Naive thymus-derived CD4-positive, alpha-beta T cell (primary cell): ENCODE measurements at regions of chr9 and their contacts with region 1.

Region 1: DNA sequence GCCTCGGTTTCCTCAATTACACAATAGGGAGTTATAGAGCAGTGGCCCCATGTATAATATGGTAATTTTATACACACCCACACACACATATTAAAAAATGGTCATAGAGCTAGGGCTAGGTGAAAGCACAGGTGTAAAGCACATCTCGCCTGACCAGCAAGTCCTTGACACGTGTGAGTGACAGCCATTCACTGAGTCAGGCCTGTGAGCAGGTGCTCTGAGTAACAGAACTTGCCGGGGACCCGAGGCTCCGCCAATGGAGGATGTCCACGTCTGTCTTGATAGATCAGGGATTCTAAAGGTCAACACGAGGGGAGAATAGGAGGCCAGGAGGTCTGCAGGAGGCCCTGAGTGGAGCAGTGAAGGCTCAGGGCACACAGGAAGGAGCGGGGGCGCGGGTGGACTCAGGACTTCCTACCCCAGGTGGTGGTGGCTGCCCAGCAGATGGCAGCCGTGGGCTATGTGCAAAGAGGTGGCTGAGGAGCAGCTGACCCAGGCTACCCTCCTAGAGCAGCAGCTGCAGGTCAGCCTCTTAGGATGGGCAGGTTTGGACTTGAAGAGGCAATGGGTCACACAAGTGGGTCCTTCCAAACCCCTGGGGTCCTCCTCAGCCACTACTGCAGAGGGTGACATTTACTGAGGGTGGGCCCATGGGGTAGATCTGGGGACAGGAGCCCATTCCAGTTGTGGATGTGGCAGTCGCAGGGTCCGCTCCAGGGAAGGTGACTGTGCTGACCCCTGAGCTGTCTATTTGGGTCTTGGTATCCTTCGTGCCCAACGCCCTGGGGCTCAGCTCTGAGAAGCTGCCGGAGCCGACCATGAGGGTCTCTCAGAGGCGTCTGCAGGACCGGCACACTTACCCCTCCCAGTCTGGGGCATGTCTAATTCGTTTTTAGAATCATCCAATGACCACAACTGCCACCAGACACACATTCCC is 45.9 kb downstream of the PRRT1B start:
- DNase-seq: peak; percentile 50 to 78 (median 68)
- ATAC-seq: peak; percentile 95
- H3K4me3 ChIP-seq: no peak overlapping the region
- H3K4me3 Mint-ChIP-seq: peak overlapping the region in 2 of 10 donors; percentile 13 to 31
- H3K27ac ChIP-seq: no peak overlapping the region
- H3K27ac Mint-ChIP-seq: peak overlapping the region; percentile 18 to 90 (median 60)
- H3K4me1 ChIP-seq: peaks cover 12 to 19% of the 10 kb centered on the region in 2 donors
- H3K4me1 Mint-ChIP-seq: peaks cover 18 to 36% (median 33%) of the 10 kb centered on the region in 7 donors
- H3K27me3 ChIP-seq: no peaks in the 10 kb centered on the region
- H3K27me3 Mint-ChIP-seq: no peaks in the 10 kb centered on the region

Region 2: DNA sequence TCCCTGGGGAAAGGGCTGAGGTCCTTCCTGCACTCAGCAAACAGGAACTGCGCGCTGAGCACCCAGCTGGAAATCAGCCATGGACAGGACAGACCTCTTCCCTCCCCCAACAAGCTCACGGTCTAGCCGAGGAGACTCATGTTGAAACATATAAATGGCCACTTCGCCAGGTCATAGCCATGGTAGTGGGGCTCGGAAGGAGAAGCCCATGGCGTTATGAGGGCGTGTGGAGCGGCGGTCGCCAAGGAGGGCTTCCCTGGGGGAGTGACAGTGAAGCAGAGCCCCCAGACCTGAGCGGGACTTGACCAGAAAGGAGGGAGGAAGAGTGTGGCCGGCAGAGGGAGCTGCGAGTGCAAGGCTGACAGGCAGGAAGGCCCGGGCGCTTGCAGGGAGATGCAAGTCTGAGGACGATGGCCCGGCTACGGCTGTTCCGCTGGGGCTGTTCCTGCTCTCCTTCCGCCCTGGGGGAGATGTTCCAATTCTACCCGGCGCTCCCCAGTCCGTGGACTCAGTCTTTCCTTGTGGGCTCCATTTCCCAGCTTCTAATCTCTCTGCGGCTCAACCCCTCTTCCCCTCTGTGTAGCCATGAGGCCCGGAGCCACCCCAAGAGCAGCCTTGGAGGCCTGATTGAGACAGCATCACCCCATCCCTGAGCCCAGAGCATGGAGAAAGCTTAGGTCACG is 241.2 kb before region 1 on chr9:
- CTCF ChIA-PET with region 1: interaction called, 3 read pairs
- POLR2A ChIA-PET with region 1: no interaction called
- intact Hi-C with region 1: loop called (anchors 1 to 2 kb)
- DNase-seq: peak; percentile 74 to 87 (median 82)
- ATAC-seq: peak; percentile 99
- H3K4me3 ChIP-seq: no peak overlapping the region
- H3K4me3 Mint-ChIP-seq: peak overlapping the region in 8 of 10 donors; percentile 12 to 80 (median 57)
- H3K27ac ChIP-seq: no peak overlapping the region
- H3K27ac Mint-ChIP-seq: peak overlapping the region in 5 of 9 donors; percentile 65 to 78 (median 70)
- H3K4me1 ChIP-seq: peaks cover 4 to 9% of the 10 kb centered on the region in 2 donors
- H3K4me1 Mint-ChIP-seq: peaks cover 0 to 15% (median 8%) of the 10 kb centered on the region in 7 donors
- H3K27me3 ChIP-seq: no peaks in the 10 kb centered on the region
- H3K27me3 Mint-ChIP-seq: peaks cover 0 to 5% (median 0%) of the 10 kb centered on the region in 5 donors

Region 3: GRCh38 chr9:131578731-131579504 is 12.3 kb before region 1 on chr9:
- CTCF ChIA-PET with region 1: interaction called, 10 read pairs
- POLR2A ChIA-PET with region 1: no interaction called
- intact Hi-C with region 1: no loop called
- DNase-seq: peak; percentile 30 to 69 (median 63)
- ATAC-seq: peak; percentile 90
- H3K4me3 ChIP-seq: peak overlapping the region; percentile 34
- H3K4me3 Mint-ChIP-seq: peak overlapping the region; percentile 29 to 79 (median 72)
- H3K27ac ChIP-seq: peak overlapping the region; percentile 71
- H3K27ac Mint-ChIP-seq: peak overlapping the region; percentile 88 to 96 (median 92)
- H3K4me1 ChIP-seq: peaks cover 23 to 26% of the 10 kb centered on the region in 2 donors
- H3K4me1 Mint-ChIP-seq: peaks cover 18 to 42% (median 26%) of the 10 kb centered on the region in 7 donors
- H3K27me3 ChIP-seq: no peaks in the 10 kb centered on the region
- H3K27me3 Mint-ChIP-seq: no peaks in the 10 kb centered on the region

Region 4: GRCh38 chr9:131627648-131628458 is 36.7 kb after region 1 on chr9:
- CTCF ChIA-PET with region 1: no interaction called
- POLR2A ChIA-PET with region 1: no interaction called
- intact Hi-C with region 1: no loop called
- DNase-seq: peak; percentile 21 to 62 (median 41)
- ATAC-seq: peak; percentile 86
- H3K4me3 ChIP-seq: no peak overlapping the region
- H3K4me3 Mint-ChIP-seq: peak overlapping the region in 4 of 10 donors; percentile 6 to 62 (median 41)
- H3K27ac ChIP-seq: peak overlapping the region; percentile 49
- H3K27ac Mint-ChIP-seq: peak overlapping the region; percentile 36 to 93 (median 80)
- H3K4me1 ChIP-seq: peaks cover 0 to 41% of the 10 kb centered on the region in 2 donors
- H3K4me1 Mint-ChIP-seq: peaks cover 0 to 64% (median 10%) of the 10 kb centered on the region in 7 donors
- H3K27me3 ChIP-seq: no peaks in the 10 kb centered on the region
- H3K27me3 Mint-ChIP-seq: no peaks in the 10 kb centered on the region

Region 5: DNA sequence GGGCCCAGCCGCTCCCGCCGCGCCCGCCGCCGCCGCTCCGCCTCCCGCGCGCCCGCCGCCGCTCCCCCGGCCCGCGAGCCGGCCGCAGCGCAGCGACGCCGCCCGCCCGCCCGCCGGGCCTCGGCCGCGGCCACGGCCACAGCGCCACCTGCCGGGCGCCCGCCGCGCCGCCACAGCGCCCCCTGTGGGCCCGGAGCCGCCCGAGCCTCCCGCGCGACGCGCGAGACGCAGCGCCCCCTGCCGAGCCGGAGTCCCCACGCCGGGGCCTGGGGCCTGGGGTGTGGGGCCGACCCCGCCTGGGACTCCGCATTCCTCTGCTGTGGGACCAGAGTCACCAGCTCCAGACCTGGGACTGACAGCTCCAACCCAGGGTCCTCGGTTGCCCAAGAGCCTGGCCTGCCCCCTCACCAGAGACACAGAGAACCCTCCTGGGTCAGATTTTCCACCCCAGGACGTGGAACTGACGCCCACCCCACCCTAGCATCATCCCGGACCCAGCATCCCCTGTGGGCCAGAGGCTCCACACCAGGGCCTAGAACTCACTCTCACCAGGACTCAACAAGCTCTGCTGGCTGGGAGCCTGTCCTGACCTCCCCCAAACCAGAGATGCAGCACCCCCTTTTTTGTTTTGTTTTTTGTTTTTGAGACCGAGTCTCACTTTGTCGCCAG is 148.9 kb after region 1 on chr9 and contains the start of gene RAPGEF1:
- CTCF ChIA-PET with region 1: interaction called, 40 read pairs
- POLR2A ChIA-PET with region 1: interaction called, 18 read pairs
- intact Hi-C with region 1: loop called in 1 of 2 experiments (anchors 1 kb)
- DNase-seq: peak; percentile 65 to 99 (median 80)
- ATAC-seq: peak; percentile 94
- H3K4me3 ChIP-seq: peak within 1 kb of the TSS; percentile 80
- H3K4me3 Mint-ChIP-seq: peak within 1 kb of the TSS; percentile 80 to 96 (median 92)
- H3K27ac ChIP-seq: peak within 1 kb of the TSS; percentile 68
- H3K27ac Mint-ChIP-seq: peak within 1 kb of the TSS; percentile 80 to 97 (median 92)
- H3K4me1 ChIP-seq: peaks cover 51 to 62% of the 10 kb centered on the region in 2 donors
- H3K4me1 Mint-ChIP-seq: peaks cover 43 to 63% (median 59%) of the 10 kb centered on the region in 7 donors
- H3K27me3 ChIP-seq: no peaks in the 10 kb centered on the region
- H3K27me3 Mint-ChIP-seq: no peaks in the 10 kb centered on the region
- total RNA-seq, gene RAPGEF1: 81.1 to 181 (median 85.8) TPM